Natural killer cell (primary cell): ENCODE measurements at regions of chr7 and their contacts with region 1.

Region 1: DNA sequence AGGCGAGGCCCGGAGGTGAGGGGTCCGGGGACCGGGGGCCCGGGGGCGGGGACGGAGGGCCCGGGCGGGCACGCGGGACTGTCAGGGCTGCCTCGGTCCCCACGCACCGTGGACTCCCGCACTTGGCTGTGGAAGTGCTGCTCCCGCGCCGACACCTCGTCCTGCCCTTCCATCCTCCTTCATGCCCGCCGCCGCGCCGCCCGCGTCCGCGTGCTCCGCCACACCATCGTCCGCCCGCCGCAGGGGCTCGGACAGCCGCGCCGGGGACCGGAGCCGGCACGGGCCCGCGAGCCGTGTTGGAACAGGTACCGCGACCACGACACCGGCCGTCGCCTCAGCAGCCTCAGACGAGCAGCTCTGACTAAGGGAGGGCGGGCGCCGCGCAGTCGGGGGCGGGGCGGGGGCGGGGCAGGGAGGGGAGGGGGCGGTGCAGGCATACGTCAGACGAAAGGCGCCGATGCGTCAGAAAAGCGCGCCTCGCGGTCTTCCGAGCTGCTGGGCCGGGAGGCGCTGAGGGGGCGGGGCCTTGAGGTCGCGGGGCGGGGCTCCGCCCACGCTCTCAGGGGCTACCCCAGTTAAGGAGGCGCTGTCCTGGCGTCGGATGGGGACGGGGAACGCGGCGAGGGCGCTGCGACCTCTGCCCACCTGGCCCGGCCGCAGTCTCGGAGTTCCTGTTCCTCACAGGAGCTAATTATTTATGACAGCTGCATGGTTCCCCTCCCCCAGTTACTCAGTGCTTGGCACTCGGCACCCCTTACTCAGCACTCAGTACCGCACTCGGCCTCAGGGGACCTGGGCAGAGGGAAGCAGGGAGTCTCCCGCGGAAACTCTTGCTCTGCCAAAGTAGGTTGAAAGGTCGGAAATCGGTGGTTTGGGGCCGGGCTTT is at the start of gene LMBR1:
- DNase-seq: peak; percentile 95 to 98
- ATAC-seq: peak; percentile 83 to 96 (median 85)
- H3K4me3 ChIP-seq: peak within 1 kb of the TSS; percentile 94
- H3K4me3 Mint-ChIP-seq: peak within 1 kb of the TSS; percentile 97
- H3K27ac ChIP-seq: peak within 1 kb of the TSS; percentile 87
- H3K27ac Mint-ChIP-seq: peak within 1 kb of the TSS; percentile 91 to 96
- H3K4me1 ChIP-seq: peaks cover 19% of the 10 kb centered on the region
- H3K4me1 Mint-ChIP-seq: peaks cover 19 to 40% of the 10 kb centered on the region in 2 donors
- H3K27me3 ChIP-seq: no peaks in the 10 kb centered on the region
- H3K27me3 Mint-ChIP-seq: peaks cover 0 to 4% of the 10 kb centered on the region in 2 donors
- CTCF ChIP-seq: peak; percentile 59
- total RNA-seq, gene LMBR1: 60.4 to 71.7 (median 66.1) TPM

Region 2: GRCh38 chr7:156802214-156802613 is 90.8 kb before region 1 on chr7:
- intact Hi-C with region 1: no loop called
- DNase-seq: no peak
- ATAC-seq: no peak
- H3K4me3 ChIP-seq: no peak overlapping the region
- H3K4me3 Mint-ChIP-seq: no peak overlapping the region
- H3K27ac ChIP-seq: no peak overlapping the region
- H3K27ac Mint-ChIP-seq: no peak overlapping the region
- H3K4me1 ChIP-seq: no peaks in the 10 kb centered on the region
- H3K4me1 Mint-ChIP-seq: no peaks in the 10 kb centered on the region
- H3K27me3 ChIP-seq: no peaks in the 10 kb centered on the region
- H3K27me3 Mint-ChIP-seq: no peaks in the 10 kb centered on the region
- CTCF ChIP-seq: no peak

Region 3: DNA sequence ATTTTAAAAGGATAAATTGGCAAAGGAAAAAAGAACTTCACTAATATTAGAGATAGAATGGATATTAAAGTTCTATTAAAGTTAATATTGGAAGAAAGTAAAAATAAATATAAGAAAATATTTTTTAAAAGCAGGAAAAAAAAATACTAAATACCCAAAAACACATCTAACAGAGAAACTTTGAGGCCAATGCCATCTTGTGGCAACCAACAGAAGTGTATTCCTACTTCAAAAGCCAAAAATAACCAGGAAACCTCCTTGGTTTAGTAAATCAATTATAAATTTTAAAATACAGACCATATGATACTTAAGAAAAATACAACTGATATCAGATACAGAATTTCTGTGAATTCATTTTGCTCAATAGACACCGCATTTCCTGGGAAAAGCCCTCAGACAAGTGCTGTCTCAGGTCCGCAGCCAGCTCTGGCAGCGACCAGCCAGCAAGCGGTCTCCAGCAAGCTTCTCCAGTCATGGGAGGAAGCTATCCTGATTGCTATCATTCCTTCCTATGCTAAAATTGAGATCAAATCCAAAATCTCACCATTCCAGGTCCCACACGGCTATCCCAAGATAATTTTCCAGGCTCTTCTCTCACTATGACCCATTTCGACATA is 65.4 kb before region 1 on chr7:
- intact Hi-C with region 1: no loop called
- DNase-seq: peak in 1 of 2 donors; percentile 44
- ATAC-seq: no peak
- H3K4me3 ChIP-seq: no peak overlapping the region
- H3K4me3 Mint-ChIP-seq: no peak overlapping the region
- H3K27ac ChIP-seq: no peak overlapping the region
- H3K27ac Mint-ChIP-seq: no peak overlapping the region
- H3K4me1 ChIP-seq: peaks cover 4% of the 10 kb centered on the region
- H3K4me1 Mint-ChIP-seq: no peaks in the 10 kb centered on the region
- H3K27me3 ChIP-seq: no peaks in the 10 kb centered on the region
- H3K27me3 Mint-ChIP-seq: no peaks in the 10 kb centered on the region
- CTCF ChIP-seq: peak; percentile 32

Region 4: DNA sequence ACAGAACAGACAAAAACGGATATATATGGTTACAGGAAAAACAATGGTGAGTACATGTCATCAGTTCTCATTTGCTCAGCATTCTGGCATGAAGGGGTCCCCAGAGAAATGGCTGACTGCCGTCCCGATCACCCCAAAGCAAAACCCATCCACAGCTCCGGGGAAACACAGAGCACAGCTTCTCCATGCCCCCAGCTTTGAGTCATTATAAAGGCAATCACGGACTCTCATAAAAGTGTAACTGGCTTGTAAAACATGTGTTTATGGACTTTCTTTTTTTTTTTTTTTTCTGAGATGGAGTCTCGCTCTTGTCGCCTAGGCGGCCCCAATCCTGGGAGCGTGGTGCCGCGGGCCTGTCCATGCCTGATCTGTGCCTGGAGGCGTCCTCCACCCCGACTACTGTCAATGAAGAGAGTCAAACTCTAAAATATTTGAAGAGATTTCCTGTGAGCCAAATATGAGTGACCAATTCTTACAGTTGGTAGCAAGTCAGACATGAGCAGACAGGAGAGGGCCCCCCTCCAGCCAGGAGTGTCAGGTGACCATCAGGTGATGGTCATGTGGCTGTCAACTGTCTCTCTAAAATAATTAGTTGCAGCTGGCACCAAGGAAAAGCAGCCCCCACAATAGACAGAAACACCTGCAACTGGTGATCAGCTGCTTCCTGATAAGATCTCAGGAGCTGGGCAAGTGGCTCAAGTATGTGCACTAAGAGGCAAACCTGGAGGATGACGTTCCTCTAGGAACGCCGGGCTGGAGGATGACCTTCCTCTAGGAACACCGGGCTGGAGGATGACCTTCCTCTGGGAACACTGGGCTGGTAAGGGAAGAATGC is 34.7 kb after region 1 on chr7:
- intact Hi-C with region 1: loop called (anchors 1 kb)
- DNase-seq: no peak
- ATAC-seq: no peak
- H3K4me3 ChIP-seq: no peak overlapping the region
- H3K4me3 Mint-ChIP-seq: no peak overlapping the region
- H3K27ac ChIP-seq: no peak overlapping the region
- H3K27ac Mint-ChIP-seq: no peak overlapping the region
- H3K4me1 ChIP-seq: peaks cover 11% of the 10 kb centered on the region
- H3K4me1 Mint-ChIP-seq: peaks cover 6 to 9% of the 10 kb centered on the region in 2 donors
- H3K27me3 ChIP-seq: peaks cover 16% of the 10 kb centered on the region
- H3K27me3 Mint-ChIP-seq: peaks cover 34 to 53% of the 10 kb centered on the region in 2 donors
- CTCF ChIP-seq: no peak

Region 5: GRCh38 chr7:156949541-156950380 is 56.7 kb after region 1 on chr7 and contains the start of gene NOM1:
- intact Hi-C with region 1: loop called (anchors 1 kb)
- DNase-seq: peak; percentile 93 to 95
- ATAC-seq: peak; percentile 97 to 98 (median 97)
- H3K4me3 ChIP-seq: peak within 1 kb of the TSS; percentile 91
- H3K4me3 Mint-ChIP-seq: peak within 1 kb of the TSS; percentile 100
- H3K27ac ChIP-seq: peak within 1 kb of the TSS; percentile 30
- H3K27ac Mint-ChIP-seq: peak within 1 kb of the TSS; percentile 68 to 82
- H3K4me1 ChIP-seq: peaks cover 26% of the 10 kb centered on the region
- H3K4me1 Mint-ChIP-seq: peaks cover 10% of the 10 kb centered on the region in 2 donors
- H3K27me3 ChIP-seq: no peaks in the 10 kb centered on the region
- H3K27me3 Mint-ChIP-seq: peaks cover 19 to 20% of the 10 kb centered on the region in 2 donors
- CTCF ChIP-seq: peak; percentile 75
- total RNA-seq, gene NOM1: 22.5 to 35.6 (median 34.7) TPM

Region 6: DNA sequence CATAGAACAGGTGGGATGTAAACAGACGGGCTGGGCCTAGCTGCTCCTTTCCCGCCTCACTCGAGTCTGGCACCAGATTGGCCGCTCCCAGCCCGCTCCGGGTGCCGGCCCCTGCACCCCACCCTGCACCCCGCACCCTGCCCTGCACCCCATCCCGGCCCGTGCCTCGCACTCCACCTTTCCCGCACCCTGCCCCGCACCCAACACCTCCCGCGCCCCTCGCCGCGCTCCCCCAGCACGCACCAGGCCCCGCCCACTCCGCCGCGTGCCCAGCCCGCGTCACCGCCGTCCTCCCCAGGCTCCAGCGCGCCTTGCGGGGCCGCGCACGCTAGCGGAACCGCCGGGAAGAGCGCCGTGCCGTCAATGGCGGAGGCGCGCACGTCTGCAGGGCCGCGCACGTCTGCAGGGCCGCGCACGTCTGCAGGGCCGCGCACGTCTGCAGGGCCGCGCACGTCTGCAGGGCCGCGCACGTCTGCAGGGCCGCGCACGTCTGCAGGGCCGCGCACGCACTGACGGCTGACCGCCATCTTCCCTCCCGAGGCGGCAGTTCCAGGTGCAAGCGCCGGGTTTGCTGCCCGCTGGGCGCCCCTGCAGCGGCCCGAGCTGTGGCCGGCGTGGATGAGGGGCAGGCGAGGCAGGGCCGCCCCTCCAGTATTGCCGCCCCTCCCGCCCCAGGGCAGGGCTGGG is 245.5 kb after region 1 on chr7 and contains the start of gene UBE3C:
- intact Hi-C with region 1: loop called (anchors 2 kb)
- DNase-seq: peak; percentile 91 to 97
- ATAC-seq: peak; percentile 81 to 93 (median 82)
- H3K4me3 ChIP-seq: peak within 1 kb of the TSS; percentile 75
- H3K4me3 Mint-ChIP-seq: peak within 1 kb of the TSS; percentile 82
- H3K27ac ChIP-seq: peak within 1 kb of the TSS; percentile 91
- H3K27ac Mint-ChIP-seq: peak within 1 kb of the TSS; percentile 81 to 92
- H3K4me1 ChIP-seq: peaks cover 27% of the 10 kb centered on the region
- H3K4me1 Mint-ChIP-seq: peaks cover 37 to 43% of the 10 kb centered on the region in 2 donors
- H3K27me3 ChIP-seq: no peaks in the 10 kb centered on the region
- H3K27me3 Mint-ChIP-seq: no peaks in the 10 kb centered on the region
- CTCF ChIP-seq: no peak
- total RNA-seq, gene UBE3C: 44.6 to 56.7 (median 55.5) TPM